Sigmoid colon (tissue), 7 donors: ENCODE measurements at regions of chr3 and their contacts with region 1.

Region 1: GRCh38 chr3:141875374-141875892 is 1.0 kb upstream of the ATP1B3 start:
- DNase-seq: peak; percentile 94
- H3K4me3 ChIP-seq: peak overlapping the region; percentile 78 to 96 (median 84)
- H3K27ac ChIP-seq: peak overlapping the region; percentile 100
- H3K4me1 ChIP-seq: peaks cover 0 to 33% (median 28%) of the 10 kb centered on the region in 4 donors
- H3K27me3 ChIP-seq: no peaks in the 10 kb centered on the region
- CTCF ChIP-seq: peak; percentile 79 to 92 (median 89)
- EP300 ChIP-seq: no peak
- POLR2A ChIP-seq: no peak

Region 2: GRCh38 chr3:141368062-141368924 is 507.1 kb before region 1 on chr3 and contains the start of gene ZBTB38:
- intact Hi-C with region 1: loop called (anchors 5 kb)
- DNase-seq: peak; percentile 95
- H3K4me3 ChIP-seq: peak within 1 kb of the TSS in 3 of 4 donors; percentile 13 to 24 (median 20)
- H3K27ac ChIP-seq: peak within 1 kb of the TSS; percentile 81 to 95 (median 90)
- H3K4me1 ChIP-seq: peaks cover 0 to 46% (median 46%) of the 10 kb centered on the region in 4 donors
- H3K27me3 ChIP-seq: no peaks in the 10 kb centered on the region
- CTCF ChIP-seq: no peak
- EP300 ChIP-seq: peak in 2 of 4 donors; percentile 60 to 65
- POLR2A ChIP-seq: peak; percentile 41 to 42
- total RNA-seq, gene ZBTB38: 150 to 178 (median 155) TPM

Region 3: DNA sequence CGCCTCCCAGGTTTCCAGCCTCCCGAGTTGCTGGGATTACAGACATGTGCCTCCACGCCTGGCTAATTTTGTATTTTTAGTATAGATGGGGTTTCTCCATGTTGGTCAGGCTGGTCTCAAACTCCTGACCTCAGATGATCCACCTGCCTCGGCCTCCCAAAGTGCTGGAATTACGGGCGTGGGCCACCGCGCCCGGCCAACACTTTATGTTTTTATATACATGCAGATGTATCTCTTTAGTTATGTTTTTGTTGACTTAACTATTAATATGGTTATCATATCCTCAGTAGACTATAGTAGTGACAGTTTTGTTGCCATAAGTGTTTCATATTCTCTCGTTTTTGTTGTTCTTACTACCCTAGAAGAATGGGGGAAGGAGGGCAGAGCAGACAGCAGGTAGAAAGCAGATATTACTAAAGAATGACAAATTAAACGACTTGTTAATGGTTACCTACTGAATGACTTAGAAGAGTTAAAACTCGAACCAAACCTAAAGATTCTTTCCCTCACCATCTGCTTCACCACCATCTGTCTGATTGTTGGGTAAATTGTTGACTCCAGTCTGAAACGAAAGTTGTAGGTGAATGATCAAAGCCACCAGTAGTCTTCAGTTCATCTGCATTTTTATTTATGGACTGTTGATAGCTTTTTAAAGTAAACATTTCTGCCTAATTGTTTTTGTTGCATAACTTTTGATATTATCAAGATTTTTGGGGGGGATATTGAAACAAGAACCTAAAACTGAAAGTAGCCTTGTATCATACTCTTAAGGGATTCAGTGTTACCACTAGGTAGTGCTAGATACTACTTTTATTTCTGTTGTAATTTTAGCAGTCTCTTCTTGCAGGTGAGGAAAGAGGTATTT is 299.3 kb before region 1 on chr3:
- intact Hi-C with region 1: loop called (anchors 2 kb)
- DNase-seq: no peak
- H3K4me3 ChIP-seq: peak overlapping the region in 2 of 4 donors; percentile 23 to 26
- H3K27ac ChIP-seq: peak overlapping the region in 3 of 4 donors; percentile 10 to 58 (median 44)
- H3K4me1 ChIP-seq: peaks cover 0 to 8% (median 0%) of the 10 kb centered on the region in 4 donors
- H3K27me3 ChIP-seq: no peaks in the 10 kb centered on the region
- CTCF ChIP-seq: peak; percentile 12 to 70 (median 38)
- EP300 ChIP-seq: no peak
- POLR2A ChIP-seq: no peak

Region 4: GRCh38 chr3:141738022-141738890 is 137.2 kb before region 1 on chr3 and contains the start of gene RNF7:
- intact Hi-C with region 1: loop called (anchors 1 kb)
- DNase-seq: peak; percentile 97
- H3K4me3 ChIP-seq: peak within 1 kb of the TSS; percentile 78 to 99 (median 90)
- H3K27ac ChIP-seq: peak within 1 kb of the TSS; percentile 95 to 98 (median 96)
- H3K4me1 ChIP-seq: peaks cover 0 to 38% (median 36%) of the 10 kb centered on the region in 4 donors
- H3K27me3 ChIP-seq: no peaks in the 10 kb centered on the region
- CTCF ChIP-seq: peak; percentile 74 to 83 (median 78)
- EP300 ChIP-seq: peak in 2 of 4 donors; percentile 46 to 56
- POLR2A ChIP-seq: peak; percentile 59 to 64
- total RNA-seq, gene RNF7: 87.2 to 195 (median 132) TPM

Region 5: GRCh38 chr3:142226484-142226883 is 351.1 kb after region 1 on chr3:
- intact Hi-C with region 1: loop called (anchors 10 kb)
- DNase-seq: no peak
- H3K4me3 ChIP-seq: no peak overlapping the region
- H3K27ac ChIP-seq: no peak overlapping the region
- H3K4me1 ChIP-seq: peaks cover 0 to 31% (median 25%) of the 10 kb centered on the region in 4 donors
- H3K27me3 ChIP-seq: no peaks in the 10 kb centered on the region
- CTCF ChIP-seq: no peak
- EP300 ChIP-seq: no peak
- POLR2A ChIP-seq: no peak